Activated naive CD4-positive, alpha-beta T cell treated with anti-CD3 and anti-CD28 coated beads for 36 hours (primary cell): ENCODE measurements at regions of chr20 and their contacts with region 1.

Region 1: GRCh38 chr20:24934101-24934661 is 14.9 kb upstream of the CST7 start:
- DNase-seq: no peak
- H3K4me3 Mint-ChIP-seq: no peak overlapping the region
- H3K27ac Mint-ChIP-seq: no peak overlapping the region
- H3K4me1 Mint-ChIP-seq: peaks cover 24% of the 10 kb centered on the region
- H3K27me3 Mint-ChIP-seq: no peaks in the 10 kb centered on the region

Region 2: GRCh38 chr20:24034820-24035219 is 899.4 kb before region 1 on chr20:
- CTCF ChIA-PET with region 1: no interaction called
- intact Hi-C with region 1: loop called (anchors 10 kb)
- DNase-seq: no peak
- H3K4me3 Mint-ChIP-seq: no peak overlapping the region
- H3K27ac Mint-ChIP-seq: no peak overlapping the region
- H3K4me1 Mint-ChIP-seq: peaks cover 19% of the 10 kb centered on the region
- H3K27me3 Mint-ChIP-seq: no peaks in the 10 kb centered on the region

Region 3: GRCh38 chr20:24917797-24918578 is 16.2 kb before region 1 on chr20:
- CTCF ChIA-PET with region 1: interaction called, 21 read pairs
- intact Hi-C with region 1: no loop called
- DNase-seq: peak; percentile 65
- H3K4me3 Mint-ChIP-seq: no peak overlapping the region
- H3K27ac Mint-ChIP-seq: no peak overlapping the region
- H3K4me1 Mint-ChIP-seq: peaks cover 5% of the 10 kb centered on the region
- H3K27me3 Mint-ChIP-seq: peaks cover 7% of the 10 kb centered on the region

Region 4: GRCh38 chr20:24955045-24955444 is 20.9 kb after region 1 on chr20:
- CTCF ChIA-PET with region 1: interaction called, 13 read pairs
- intact Hi-C with region 1: no loop called
- DNase-seq: peak; percentile 39
- H3K4me3 Mint-ChIP-seq: no peak overlapping the region
- H3K27ac Mint-ChIP-seq: peak overlapping the region; percentile 84
- H3K4me1 Mint-ChIP-seq: peaks cover 29% of the 10 kb centered on the region
- H3K27me3 Mint-ChIP-seq: no peaks in the 10 kb centered on the region

Region 5: DNA sequence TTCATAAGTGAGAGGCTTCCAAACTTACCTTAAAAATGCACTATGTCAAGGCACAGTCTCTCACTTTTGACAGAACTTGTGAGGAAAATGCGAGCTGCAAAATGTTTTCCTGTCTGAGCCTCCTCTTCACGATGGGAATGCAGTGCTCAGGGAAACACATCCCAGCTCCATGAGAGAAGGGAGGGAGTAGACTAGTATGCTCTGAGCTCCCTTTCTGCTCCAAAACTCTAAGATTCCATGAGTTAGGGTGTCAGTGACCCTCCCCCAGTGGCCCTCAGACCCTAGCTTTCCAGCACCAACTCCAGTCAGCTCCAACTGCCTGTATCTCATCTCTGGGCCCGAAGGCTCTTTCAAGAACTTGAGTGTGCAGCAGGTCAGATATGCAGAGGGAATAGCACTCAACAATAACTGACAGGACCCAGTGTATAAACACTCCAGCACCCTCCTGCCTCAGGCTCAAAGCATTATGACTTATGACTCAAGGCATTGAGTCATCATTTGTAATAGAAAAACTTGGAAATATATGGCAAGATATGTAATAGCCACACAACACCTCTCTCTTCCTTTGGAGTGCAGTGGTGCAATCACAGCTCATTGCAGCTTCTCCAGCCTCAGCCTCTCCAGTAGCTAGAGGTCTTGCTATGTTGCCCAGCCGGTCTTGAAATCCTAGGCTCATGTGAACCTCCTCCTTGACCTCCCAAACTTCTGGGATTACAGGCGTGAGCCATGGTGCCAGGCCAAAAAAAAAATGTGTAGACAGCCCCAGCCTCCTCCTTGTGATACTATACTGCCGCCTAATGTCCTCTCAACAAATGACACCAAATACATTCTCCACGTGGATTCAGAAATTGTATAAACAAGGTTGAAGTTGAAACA is 244.6 kb after region 1 on chr20:
- CTCF ChIA-PET with region 1: no interaction called
- intact Hi-C with region 1: loop called (anchors 10 kb)
- DNase-seq: peak; percentile 38
- H3K4me3 Mint-ChIP-seq: no peak overlapping the region
- H3K27ac Mint-ChIP-seq: no peak overlapping the region
- H3K4me1 Mint-ChIP-seq: no peaks in the 10 kb centered on the region
- H3K27me3 Mint-ChIP-seq: peaks cover 7% of the 10 kb centered on the region